Activated T-helper 2 cell treated with anti-CD3 and anti-CD28 coated beads, Interferon-gamma antibody, Interleukin-2, Interleukin-4, amounts not matched to agents 10 μg/mL and 5 μg/mL and 100 μg/mL, durations not matched to agents 14 hours and 24 hours and 36 hours (primary cell): ENCODE measurements at regions of chr7 and their contacts with region 1.

Region 1: GRCh38 chr7:37448636-37449361 is at the start of gene ELMO1:
- DNase-seq: peak; percentile 79
- H3K4me3 Mint-ChIP-seq: peak within 1 kb of the TSS; percentile 97
- H3K27ac Mint-ChIP-seq: peak within 1 kb of the TSS; percentile 98
- H3K4me1 Mint-ChIP-seq: peaks cover 32% of the 10 kb centered on the region
- H3K27me3 Mint-ChIP-seq: peaks cover 13% of the 10 kb centered on the region
- total RNA-seq, gene ELMO1: 112 and 117 TPM in 2 replicates

Region 2: DNA sequence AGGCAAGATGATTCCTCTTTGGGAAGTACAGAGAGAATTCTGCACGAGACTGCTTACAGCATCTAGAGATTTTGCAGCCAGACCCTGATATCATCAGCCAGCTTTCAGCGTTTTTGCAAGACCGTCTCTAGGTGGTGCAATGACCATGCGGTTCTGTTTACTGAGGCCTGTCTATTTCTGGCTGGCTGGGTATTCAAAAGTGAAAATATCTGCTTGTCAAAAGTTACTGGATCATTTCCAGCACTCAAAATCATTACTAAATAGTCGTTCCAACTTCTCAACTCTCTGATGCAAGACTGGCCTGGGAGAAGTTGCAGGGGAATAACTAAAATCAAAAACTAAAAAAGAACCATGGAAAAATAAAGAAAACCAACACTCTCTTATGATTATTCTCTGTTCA is 240.3 kb before region 1 on chr7:
- intact Hi-C with region 1: loop called (anchors 5 kb)
- DNase-seq: peak; percentile 19
- H3K4me3 Mint-ChIP-seq: no peak overlapping the region
- H3K27ac Mint-ChIP-seq: peak overlapping the region; percentile 65
- H3K4me1 Mint-ChIP-seq: peaks cover 21% of the 10 kb centered on the region
- H3K27me3 Mint-ChIP-seq: no peaks in the 10 kb centered on the region

Region 3: DNA sequence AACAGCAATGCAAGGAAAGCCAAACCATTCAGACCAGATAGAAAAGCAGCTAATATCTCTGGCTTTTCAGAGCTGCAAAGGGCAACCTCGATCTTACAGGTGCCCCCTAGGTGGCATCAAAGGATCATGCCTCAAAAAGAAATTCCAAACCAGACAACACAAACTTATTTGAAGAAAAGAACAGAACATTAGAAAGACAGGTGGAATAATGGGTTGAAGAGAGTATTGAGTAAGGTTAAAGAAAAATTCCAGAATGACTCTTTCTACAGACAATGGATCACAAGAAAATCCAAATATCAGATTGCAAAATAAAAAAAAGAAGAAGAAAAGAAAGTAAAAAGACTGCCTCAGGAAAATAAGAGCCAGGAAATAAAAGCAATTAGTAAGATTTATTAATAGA is 213.9 kb before region 1 on chr7:
- intact Hi-C with region 1: loop called (anchors 10 kb)
- DNase-seq: no peak
- H3K4me3 Mint-ChIP-seq: no peak overlapping the region
- H3K27ac Mint-ChIP-seq: no peak overlapping the region
- H3K4me1 Mint-ChIP-seq: peaks cover 14% of the 10 kb centered on the region
- H3K27me3 Mint-ChIP-seq: no peaks in the 10 kb centered on the region

Region 4: GRCh38 chr7:37408291-37409228 is 40.2 kb before region 1 on chr7:
- intact Hi-C with region 1: loop called (anchors 1 kb)
- DNase-seq: no peak
- H3K4me3 Mint-ChIP-seq: peak overlapping the region; percentile 80
- H3K27ac Mint-ChIP-seq: peak overlapping the region; percentile 90
- H3K4me1 Mint-ChIP-seq: peaks cover 55% of the 10 kb centered on the region
- H3K27me3 Mint-ChIP-seq: no peaks in the 10 kb centered on the region

Region 5: DNA sequence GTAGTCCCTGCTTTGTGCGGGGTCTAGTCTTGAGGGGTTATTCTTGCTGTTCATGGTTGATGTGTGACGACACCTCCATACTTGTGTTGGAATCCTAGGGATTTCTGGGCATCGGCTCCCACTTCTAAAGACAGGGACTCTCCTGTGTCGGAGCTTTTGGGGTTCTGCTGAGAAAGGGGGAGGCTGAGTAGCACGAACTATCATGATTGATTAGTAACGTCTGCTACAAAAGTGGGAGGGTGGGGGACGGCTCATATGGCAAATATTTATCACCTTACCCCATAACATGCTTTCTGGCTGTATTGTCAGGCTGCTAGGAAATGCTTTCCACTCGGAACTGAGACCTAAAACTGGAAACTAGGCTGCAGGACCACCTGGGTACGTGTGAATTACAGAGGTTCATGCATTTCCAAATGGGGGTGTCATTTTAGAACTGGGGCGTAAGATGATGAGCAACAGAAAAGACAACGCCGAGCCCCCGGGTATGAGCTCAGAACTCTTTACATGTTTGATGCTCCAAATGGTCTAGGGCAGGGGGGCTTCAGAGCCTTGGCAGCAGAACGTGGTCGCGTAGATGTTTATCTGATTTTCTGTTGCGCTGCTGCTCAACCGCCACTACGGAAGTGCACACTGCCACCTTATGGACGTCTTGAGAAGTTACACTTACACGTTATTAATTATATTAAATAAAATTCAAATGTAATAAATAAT is 384.5 kb after region 1 on chr7:
- intact Hi-C with region 1: loop called (anchors 5 kb)
- DNase-seq: no peak
- H3K4me3 Mint-ChIP-seq: peak overlapping the region; percentile 69
- H3K27ac Mint-ChIP-seq: no peak overlapping the region
- H3K4me1 Mint-ChIP-seq: peaks cover 4% of the 10 kb centered on the region
- H3K27me3 Mint-ChIP-seq: peaks cover 28% of the 10 kb centered on the region